Right ventricle myocardium superior (tissue), 1 donor: ENCODE measurements at regions of chr10 and their contacts with region 1.

Region 1: GRCh38 chr10:118241229-118242137 is 100.6 kb downstream of the FAM204A start:
- DNase-seq: peak; percentile 81
- ATAC-seq: peak; percentile 79

Region 2: DNA sequence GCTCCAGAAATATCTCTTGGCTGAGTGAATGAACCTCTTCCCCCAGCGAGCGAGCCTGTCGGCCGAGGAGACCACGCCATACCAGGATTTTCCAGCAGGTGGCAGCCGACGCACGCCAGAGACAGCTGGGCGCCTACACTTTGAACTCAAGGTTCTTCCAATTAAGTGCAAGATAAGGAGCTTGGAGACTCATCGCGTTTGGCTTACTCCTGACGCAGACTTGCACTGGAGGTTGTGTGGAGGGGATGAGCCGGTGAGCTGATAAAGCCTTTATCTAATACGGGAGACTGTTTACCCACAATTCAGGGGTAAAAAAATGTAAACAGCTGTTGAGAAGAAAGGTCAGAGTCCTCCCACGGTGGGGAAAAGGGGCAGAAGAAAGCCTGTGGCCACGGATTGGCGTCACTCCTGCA is 744.9 kb before region 1 on chr10:
- intact Hi-C with region 1: loop called (anchors 5 kb)
- DNase-seq: peak; percentile 85
- ATAC-seq: peak; percentile 95

Region 3: GRCh38 chr10:117860823-117861222 is 380.7 kb before region 1 on chr10:
- intact Hi-C with region 1: loop called (anchors 10 kb)
- DNase-seq: no peak
- ATAC-seq: no peak

Region 4: GRCh38 chr10:118116715-118117449 is 124.6 kb before region 1 on chr10:
- intact Hi-C with region 1: no loop called
- DNase-seq: no peak
- ATAC-seq: peak; percentile 56

Region 5: GRCh38 chr10:118183180-118183579 is 58.3 kb before region 1 on chr10:
- intact Hi-C with region 1: no loop called
- DNase-seq: no peak
- ATAC-seq: no peak